ENCODE measurements at regions of chr3 and their contacts with region 1.

Region 1: DNA sequence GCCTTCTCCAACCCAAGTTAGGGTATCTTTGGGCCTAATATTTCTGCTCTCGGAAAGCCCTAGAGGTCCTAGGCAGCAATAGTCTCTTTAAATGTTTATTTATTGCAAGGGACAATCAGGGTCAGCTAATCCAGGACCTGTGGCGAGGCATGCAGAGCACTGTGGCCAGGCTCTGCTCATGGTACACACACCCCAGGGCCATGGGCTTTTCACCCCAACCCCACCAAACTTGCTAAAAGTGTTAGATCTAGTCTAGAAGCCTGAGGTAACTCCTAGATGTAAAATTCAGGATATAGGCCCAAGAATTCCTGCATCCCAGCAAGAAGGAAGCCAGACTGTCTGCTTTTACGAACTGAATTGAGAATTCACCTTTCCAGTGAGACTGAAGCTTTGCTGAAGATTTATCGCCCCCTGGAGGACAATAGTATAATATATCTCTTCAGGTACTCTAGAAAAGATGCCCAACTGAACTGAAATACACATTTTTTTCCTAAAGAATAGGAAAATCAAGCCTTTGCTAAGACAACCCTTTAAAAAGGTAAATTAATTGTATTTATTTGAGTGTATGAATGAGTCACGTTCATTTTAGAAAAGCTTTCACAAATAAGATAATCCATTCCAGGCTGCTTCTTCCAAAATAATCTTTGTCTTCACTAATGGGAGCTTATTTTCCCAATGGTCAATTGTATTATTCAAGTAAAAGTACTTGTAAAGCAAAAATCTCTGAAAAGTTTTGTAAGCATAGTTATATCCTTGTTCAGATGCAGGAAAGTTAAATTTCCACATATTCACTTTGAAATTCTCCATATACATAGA is 89.8 kb downstream of the LRRC3B start:
- DNase-seq: peak; percentile 11
- H3K4me3 ChIP-seq: no peak overlapping the region
- H3K27ac ChIP-seq: no peak overlapping the region
- H3K4me1 ChIP-seq: no peaks in the 10 kb centered on the region
- H3K27me3 ChIP-seq: no peaks in the 10 kb centered on the region
- CTCF ChIP-seq: peak; percentile 51 to 65

Region 2: GRCh38 chr3:25843332-25843731 is 869.1 kb before region 1 on chr3:
- CTCF ChIA-PET with region 1: no interaction called
- dilution Hi-C with region 1: no loop called
- in situ Hi-C with region 1: no loop called
- intact Hi-C with region 1: loop called (anchors 5 kb)
- DNase-seq: no peak
- H3K4me3 ChIP-seq: no peak overlapping the region
- H3K27ac ChIP-seq: no peak overlapping the region
- H3K4me1 ChIP-seq: no peaks in the 10 kb centered on the region
- H3K27me3 ChIP-seq: peaks cover 2% of the 10 kb centered on the region
- CTCF ChIP-seq: no peak

Region 3: DNA sequence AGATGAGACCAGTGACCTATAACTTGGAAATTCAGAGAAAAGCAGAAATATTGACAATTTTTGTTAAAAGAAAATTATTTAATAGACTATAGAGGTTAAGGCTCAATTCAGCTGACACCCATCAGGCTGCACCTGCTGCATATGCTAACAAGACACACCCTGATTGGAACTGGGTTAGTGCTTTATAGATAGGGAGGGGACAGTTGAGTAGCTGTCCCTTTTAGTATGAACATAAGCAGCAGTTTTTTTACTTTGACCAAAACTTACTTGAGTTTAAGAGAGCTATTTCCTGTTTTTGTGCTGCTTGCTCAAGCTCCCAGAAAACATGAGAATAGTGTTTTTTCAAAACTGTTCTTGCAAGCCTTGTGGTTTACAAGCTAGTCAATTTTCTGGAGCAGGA is 202.8 kb after region 1 on chr3:
- CTCF ChIA-PET with region 1: no interaction called
- dilution Hi-C with region 1: no loop called
- in situ Hi-C with region 1: no loop called
- intact Hi-C with region 1: no loop called
- DNase-seq: no peak
- H3K4me3 ChIP-seq: no peak overlapping the region
- H3K27ac ChIP-seq: no peak overlapping the region
- H3K4me1 ChIP-seq: no peaks in the 10 kb centered on the region
- H3K27me3 ChIP-seq: no peaks in the 10 kb centered on the region
- CTCF ChIP-seq: no peak

Measured in mammary epithelial cell (primary cell).